Activated CD4-positive, alpha-beta T cell treated with anti-CD3 and anti-CD28 coated beads for 36 hours (primary cell): ENCODE measurements at regions of chr2 and their contacts with region 1.

Region 1: GRCh38 chr2:164737612-164738081 is 104.0 kb downstream of the COBLL1 start:
- DNase-seq: peak; percentile 50
- ATAC-seq: peak; percentile 65
- H3K4me3 Mint-ChIP-seq: no peak overlapping the region
- H3K27ac Mint-ChIP-seq: no peak overlapping the region
- H3K4me1 Mint-ChIP-seq: peaks cover 4% of the 10 kb centered on the region
- H3K27me3 Mint-ChIP-seq: peaks cover 6% of the 10 kb centered on the region

Region 2: GRCh38 chr2:164287056-164287455 is 450.6 kb before region 1 on chr2:
- CTCF ChIA-PET with region 1: no interaction called
- POLR2A ChIA-PET with region 1: no interaction called
- intact Hi-C with region 1: no loop called
- DNase-seq: no peak
- ATAC-seq: no peak
- H3K4me3 Mint-ChIP-seq: no peak overlapping the region
- H3K27ac Mint-ChIP-seq: no peak overlapping the region
- H3K4me1 Mint-ChIP-seq: no peaks in the 10 kb centered on the region
- H3K27me3 Mint-ChIP-seq: no peaks in the 10 kb centered on the region

Region 3: DNA sequence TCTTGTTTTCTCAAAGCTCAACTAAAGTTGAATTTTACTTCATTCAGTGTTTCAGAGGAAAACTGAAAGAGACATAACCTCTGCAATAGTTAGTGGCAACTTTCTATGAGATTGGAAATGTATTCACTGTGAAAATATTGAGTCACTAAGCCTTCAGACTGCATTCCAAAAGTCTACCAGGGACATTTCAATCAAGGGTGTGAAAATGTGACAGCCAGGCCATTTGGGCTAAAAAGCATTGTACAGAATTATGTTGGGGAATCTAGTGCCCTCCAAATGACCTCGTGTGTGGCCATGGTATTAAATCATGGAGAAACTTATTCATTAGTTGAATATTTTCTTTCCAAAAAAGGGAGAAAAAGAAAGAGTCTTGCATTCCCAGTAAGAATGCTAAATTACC is 368.3 kb before region 1 on chr2:
- CTCF ChIA-PET with region 1: no interaction called
- POLR2A ChIA-PET with region 1: no interaction called
- intact Hi-C with region 1: no loop called
- DNase-seq: no peak
- ATAC-seq: no peak
- H3K4me3 Mint-ChIP-seq: no peak overlapping the region
- H3K27ac Mint-ChIP-seq: no peak overlapping the region
- H3K4me1 Mint-ChIP-seq: no peaks in the 10 kb centered on the region
- H3K27me3 Mint-ChIP-seq: no peaks in the 10 kb centered on the region

Region 4: DNA sequence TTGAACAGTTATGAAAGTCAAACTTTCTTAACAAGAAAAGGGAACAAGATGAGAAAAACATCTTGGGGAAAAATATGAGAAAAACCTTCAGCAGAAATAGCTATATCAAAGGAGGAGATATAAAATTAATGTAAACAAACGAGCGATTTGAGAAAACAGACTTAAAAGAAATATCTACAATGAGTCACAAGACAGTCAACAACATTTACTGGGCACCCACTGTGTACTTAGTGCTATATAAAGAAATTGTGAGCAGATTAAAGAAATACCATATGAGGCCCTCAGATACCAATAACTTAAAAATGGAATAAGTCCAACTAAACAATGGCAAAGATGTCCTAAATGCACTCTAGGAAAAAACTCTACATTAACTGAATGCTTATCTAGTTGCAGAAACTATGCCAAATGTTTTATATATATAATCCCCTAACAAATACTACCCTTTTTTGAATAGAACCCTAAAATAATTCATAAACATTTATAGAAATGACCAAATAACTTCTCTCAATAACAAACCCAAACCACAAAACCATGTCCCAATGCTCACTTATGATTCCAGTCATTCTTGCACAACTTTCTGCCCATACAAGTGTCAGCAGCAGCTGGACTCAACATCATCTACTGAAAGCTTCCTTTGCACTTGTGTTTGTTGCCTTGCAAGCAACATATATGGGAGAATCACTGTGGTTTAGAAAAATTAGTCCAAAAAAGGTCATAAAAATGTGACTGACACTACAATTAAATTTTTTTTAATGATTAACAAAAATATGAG is 20.5 kb after region 1 on chr2:
- CTCF ChIA-PET with region 1: no interaction called
- POLR2A ChIA-PET with region 1: no interaction called
- intact Hi-C with region 1: no loop called
- DNase-seq: no peak
- ATAC-seq: no peak
- H3K4me3 Mint-ChIP-seq: no peak overlapping the region
- H3K27ac Mint-ChIP-seq: no peak overlapping the region
- H3K4me1 Mint-ChIP-seq: peaks cover 13% of the 10 kb centered on the region
- H3K27me3 Mint-ChIP-seq: no peaks in the 10 kb centered on the region

Region 5: DNA sequence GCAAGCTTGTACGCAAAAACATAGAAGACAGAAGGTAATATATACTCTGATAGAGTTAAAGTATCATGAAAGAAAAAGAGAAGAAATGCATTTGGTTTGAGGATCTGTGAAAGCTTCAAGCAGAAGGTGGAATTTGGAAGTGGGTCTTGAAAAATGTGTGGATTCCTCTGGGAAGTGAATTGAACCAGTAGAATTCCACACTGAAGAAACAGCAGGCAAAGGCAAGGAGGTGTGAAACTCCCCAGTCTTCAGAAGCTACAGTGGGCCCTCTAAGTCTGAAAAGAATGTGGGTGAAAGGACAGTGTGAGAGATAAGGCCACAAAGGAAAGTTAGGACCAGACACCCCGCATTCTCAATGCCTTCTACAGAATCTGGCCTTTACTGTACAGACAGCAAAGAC is 78.4 kb after region 1 on chr2:
- CTCF ChIA-PET with region 1: no interaction called
- POLR2A ChIA-PET with region 1: no interaction called
- intact Hi-C with region 1: no loop called
- DNase-seq: no peak
- ATAC-seq: no peak
- H3K4me3 Mint-ChIP-seq: no peak overlapping the region
- H3K27ac Mint-ChIP-seq: no peak overlapping the region
- H3K4me1 Mint-ChIP-seq: no peaks in the 10 kb centered on the region
- H3K27me3 Mint-ChIP-seq: no peaks in the 10 kb centered on the region

Region 6: DNA sequence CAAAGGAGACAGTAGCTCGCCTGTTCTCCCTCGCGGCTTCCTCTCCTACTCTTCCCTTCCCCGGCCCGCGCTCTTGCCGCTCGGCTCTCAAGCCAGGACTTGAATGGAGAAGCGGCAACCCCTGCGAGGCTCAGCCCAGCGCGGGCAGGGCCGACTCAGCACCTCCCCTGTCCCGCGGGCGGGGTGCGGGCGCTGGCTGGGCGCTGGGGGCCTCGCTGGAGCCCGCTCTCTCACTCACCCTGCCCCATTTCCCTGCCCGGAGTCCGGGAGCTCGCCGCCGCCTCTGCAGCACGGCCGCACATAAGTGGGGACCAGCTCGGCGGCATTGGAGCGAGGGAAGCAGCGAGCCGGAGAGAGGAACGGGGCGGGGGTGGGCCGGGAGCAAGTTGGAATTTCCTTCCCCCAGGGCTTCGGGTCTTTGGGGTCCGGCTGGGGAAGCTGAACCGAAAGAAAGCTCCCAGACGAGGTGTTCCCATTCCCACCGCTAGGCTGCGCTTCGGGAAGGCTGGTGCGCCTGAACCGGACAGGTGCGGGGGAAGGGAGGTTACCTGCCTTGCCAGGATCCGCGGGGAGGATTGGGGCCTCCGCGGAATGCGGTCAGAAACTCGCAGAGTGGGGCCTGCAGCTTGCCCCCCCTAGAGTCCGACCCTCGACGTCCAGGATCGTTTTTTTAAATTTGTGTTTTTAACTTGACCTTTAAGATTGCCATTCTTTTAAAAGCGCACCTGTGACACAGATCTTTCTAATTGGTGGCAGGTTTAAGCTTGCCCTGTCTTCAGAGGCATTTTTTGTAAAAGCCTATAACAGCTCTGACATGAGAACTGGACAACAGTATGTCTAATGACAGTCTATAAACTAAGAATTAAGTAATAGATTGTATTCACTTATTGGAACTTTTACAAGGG is 104.3 kb after region 1 on chr2 and contains the start of gene COBLL1:
- CTCF ChIA-PET with region 1: interaction called, 4 read pairs
- POLR2A ChIA-PET with region 1: no interaction called
- intact Hi-C with region 1: loop called (anchors 2 to 5 kb)
- DNase-seq: peak; percentile 61
- ATAC-seq: peak; percentile 69
- H3K4me3 Mint-ChIP-seq: peak within 1 kb of the TSS; percentile 63
- H3K27ac Mint-ChIP-seq: no peak within 1 kb of the TSS
- H3K4me1 Mint-ChIP-seq: peaks cover 9% of the 10 kb centered on the region
- H3K27me3 Mint-ChIP-seq: peaks cover 31% of the 10 kb centered on the region
- total RNA-seq, gene COBLL1: not detected

Region 7: GRCh38 chr2:164910101-164910899 is 172.7 kb after region 1 on chr2:
- CTCF ChIA-PET with region 1: interaction called, 3 read pairs
- POLR2A ChIA-PET with region 1: no interaction called
- intact Hi-C with region 1: loop called (anchors 1 to 2 kb)
- DNase-seq: peak; percentile 56
- ATAC-seq: peak; percentile 98
- H3K4me3 Mint-ChIP-seq: no peak overlapping the region
- H3K27ac Mint-ChIP-seq: no peak overlapping the region
- H3K4me1 Mint-ChIP-seq: peaks cover 9% of the 10 kb centered on the region
- H3K27me3 Mint-ChIP-seq: no peaks in the 10 kb centered on the region

Region 8: GRCh38 chr2:165203689-165204559 is 466.3 kb after region 1 on chr2 and contains the start of gene SCN3A:
- CTCF ChIA-PET with region 1: interaction called, 3 read pairs
- POLR2A ChIA-PET with region 1: no interaction called
- intact Hi-C with region 1: loop called (anchors 2 to 10 kb)
- DNase-seq: peak; percentile 30
- ATAC-seq: peak; percentile 19
- H3K4me3 Mint-ChIP-seq: no peak within 1 kb of the TSS
- H3K27ac Mint-ChIP-seq: no peak within 1 kb of the TSS
- H3K4me1 Mint-ChIP-seq: no peaks in the 10 kb centered on the region
- H3K27me3 Mint-ChIP-seq: peaks cover 2% of the 10 kb centered on the region
- total RNA-seq, gene SCN3A: 0.23 to 0.30 TPM

Region 9: DNA sequence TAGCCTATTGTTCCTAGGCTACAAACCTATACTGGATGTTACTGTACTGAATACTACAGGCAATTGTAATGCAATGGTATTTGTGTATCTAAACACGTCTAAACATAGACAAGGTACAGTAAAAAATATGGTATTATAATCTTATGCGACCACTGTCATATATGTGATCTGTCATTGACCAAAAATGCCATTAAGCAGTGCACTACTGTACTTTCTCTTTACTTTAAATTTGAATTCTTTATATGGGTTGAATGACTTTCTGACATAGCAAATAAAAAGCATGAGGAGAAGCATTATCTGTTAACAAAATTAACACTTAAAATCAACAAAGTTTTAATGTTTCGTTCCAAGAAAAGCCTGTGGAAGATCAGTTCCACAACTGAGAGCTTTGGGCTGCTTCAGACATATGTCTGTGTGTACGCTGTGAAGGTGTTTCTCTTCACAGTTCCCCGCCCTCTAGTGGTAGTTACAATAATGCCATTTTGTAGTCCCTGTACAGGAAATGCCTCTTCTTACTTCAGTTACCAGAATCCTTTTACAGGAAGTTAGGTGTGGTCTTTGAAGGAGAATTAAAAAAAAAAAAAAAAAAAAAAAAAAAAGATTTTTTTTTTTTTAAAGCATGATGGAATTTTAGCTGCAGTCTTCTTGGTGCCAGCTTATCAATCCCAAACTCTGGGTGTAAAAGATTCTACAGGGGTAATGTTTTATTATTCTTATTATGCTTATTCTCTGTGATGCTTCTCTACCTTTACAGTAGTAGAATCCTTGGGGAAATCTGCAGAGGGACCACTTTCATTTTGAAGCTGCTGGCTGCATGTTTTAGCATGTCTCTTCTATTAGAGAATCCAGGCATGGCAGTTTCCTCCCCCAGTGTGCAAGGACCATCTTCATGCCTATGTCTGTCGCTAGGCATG is 556.0 kb after region 1 on chr2:
- CTCF ChIA-PET with region 1: no interaction called
- POLR2A ChIA-PET with region 1: no interaction called
- intact Hi-C with region 1: loop called (anchors 2 to 5 kb)
- DNase-seq: peak; percentile 36
- ATAC-seq: peak; percentile 100
- H3K4me3 Mint-ChIP-seq: no peak overlapping the region
- H3K27ac Mint-ChIP-seq: no peak overlapping the region
- H3K4me1 Mint-ChIP-seq: peaks cover 2% of the 10 kb centered on the region
- H3K27me3 Mint-ChIP-seq: peaks cover 6% of the 10 kb centered on the region